ENCODE measurements at regions of chr6 and their contacts with region 1.

Region 1: DNA sequence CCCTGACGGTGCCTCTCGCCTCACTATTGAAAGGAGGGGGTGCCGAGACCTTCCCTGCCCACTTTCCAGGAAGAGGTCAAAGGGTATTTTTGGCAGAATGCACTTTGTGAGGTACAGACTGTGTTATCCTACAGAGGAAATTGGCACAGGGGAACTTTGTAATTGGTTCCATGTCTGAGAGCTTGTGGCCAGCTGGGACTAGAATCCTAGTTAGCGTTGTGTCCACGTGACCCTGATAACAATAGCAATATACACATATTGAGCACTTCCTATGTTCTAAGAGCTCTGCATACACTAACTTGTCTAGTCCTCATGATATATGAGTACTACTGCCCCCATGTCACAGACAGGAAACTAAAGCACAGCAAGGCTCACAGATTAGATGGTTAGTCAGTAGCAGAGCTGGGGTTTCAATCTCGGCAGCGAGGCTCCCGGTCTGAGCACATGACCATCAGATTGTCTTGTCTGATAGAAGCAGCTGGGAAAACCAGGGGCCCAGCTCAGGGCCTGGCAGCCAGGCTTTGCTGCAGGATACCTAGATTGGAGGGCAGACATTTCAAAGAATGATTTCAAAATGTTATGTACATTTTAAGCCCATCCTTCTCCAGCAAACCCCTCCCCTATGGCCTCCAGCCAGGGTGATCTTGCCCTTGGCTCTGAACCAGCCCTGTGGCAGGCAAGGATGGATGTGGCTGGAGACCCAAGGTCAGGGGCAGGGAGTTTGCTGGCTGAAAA is 1.4 kb downstream of the MAPK13 start:
- DNase-seq: peak; percentile 85
- H3K4me3 Mint-ChIP-seq: peak overlapping the region; percentile 89
- H3K27ac Mint-ChIP-seq: peak overlapping the region; percentile 94
- H3K4me1 Mint-ChIP-seq: peaks cover 44% of the 10 kb centered on the region
- H3K27me3 Mint-ChIP-seq: no peaks in the 10 kb centered on the region

Region 2: GRCh38 chr6:36169023-36170007 is 37.6 kb after region 1 on chr6:
- intact Hi-C with region 1: loop called (anchors 1 kb)
- DNase-seq: peak; percentile 69
- H3K4me3 Mint-ChIP-seq: peak overlapping the region; percentile 44
- H3K27ac Mint-ChIP-seq: peak overlapping the region; percentile 84
- H3K4me1 Mint-ChIP-seq: peaks cover 22% of the 10 kb centered on the region
- H3K27me3 Mint-ChIP-seq: peaks cover 5% of the 10 kb centered on the region

Region 3: GRCh38 chr6:36312854-36313648 is 181.4 kb after region 1 on chr6:
- intact Hi-C with region 1: no loop called
- DNase-seq: no peak
- H3K4me3 Mint-ChIP-seq: no peak overlapping the region
- H3K27ac Mint-ChIP-seq: no peak overlapping the region
- H3K4me1 Mint-ChIP-seq: peaks cover 5% of the 10 kb centered on the region
- H3K27me3 Mint-ChIP-seq: peaks cover 27% of the 10 kb centered on the region

Measured in activated CD4-positive, alpha-beta T cell treated with anti-CD3 and anti-CD28 coated beads, Interleukin-2, amount 10 ng/mL, durations not matched to agents 24 days and 14 days (primary cell).